ENCODE measurements at regions of chr12 and their contacts with region 1.

Region 1: GRCh38 chr12:30965613-30965985 is 39.1 kb downstream of the TSPAN11 start:
- DNase-seq: no peak
- ATAC-seq: no peak
- H3K4me3 ChIP-seq: no peak overlapping the region
- H3K27ac ChIP-seq: no peak overlapping the region
- H3K4me1 ChIP-seq: peaks cover 0 to 30% (median 7%) of the 10 kb centered on the region in 9 donors
- H3K27me3 ChIP-seq: no peaks in the 10 kb centered on the region
- CTCF ChIP-seq: peak in 5 of 9 donors; percentile 13 to 42 (median 22)

Region 2: GRCh38 chr12:30874455-30875321 is 90.9 kb before region 1 on chr12:
- intact Hi-C with region 1: loop called in 1 of 10 experiments (anchors 10 kb)
- DNase-seq: peak; percentile 11 to 15
- ATAC-seq: peak in 1 of 8 donors; percentile 20
- H3K4me3 ChIP-seq: no peak overlapping the region
- H3K27ac ChIP-seq: no peak overlapping the region
- H3K4me1 ChIP-seq: peaks cover 0 to 4% (median 0%) of the 10 kb centered on the region in 9 donors
- H3K27me3 ChIP-seq: peaks cover 0 to 31% (median 0%) of the 10 kb centered on the region in 7 donors
- CTCF ChIP-seq: no peak

Region 3: DNA sequence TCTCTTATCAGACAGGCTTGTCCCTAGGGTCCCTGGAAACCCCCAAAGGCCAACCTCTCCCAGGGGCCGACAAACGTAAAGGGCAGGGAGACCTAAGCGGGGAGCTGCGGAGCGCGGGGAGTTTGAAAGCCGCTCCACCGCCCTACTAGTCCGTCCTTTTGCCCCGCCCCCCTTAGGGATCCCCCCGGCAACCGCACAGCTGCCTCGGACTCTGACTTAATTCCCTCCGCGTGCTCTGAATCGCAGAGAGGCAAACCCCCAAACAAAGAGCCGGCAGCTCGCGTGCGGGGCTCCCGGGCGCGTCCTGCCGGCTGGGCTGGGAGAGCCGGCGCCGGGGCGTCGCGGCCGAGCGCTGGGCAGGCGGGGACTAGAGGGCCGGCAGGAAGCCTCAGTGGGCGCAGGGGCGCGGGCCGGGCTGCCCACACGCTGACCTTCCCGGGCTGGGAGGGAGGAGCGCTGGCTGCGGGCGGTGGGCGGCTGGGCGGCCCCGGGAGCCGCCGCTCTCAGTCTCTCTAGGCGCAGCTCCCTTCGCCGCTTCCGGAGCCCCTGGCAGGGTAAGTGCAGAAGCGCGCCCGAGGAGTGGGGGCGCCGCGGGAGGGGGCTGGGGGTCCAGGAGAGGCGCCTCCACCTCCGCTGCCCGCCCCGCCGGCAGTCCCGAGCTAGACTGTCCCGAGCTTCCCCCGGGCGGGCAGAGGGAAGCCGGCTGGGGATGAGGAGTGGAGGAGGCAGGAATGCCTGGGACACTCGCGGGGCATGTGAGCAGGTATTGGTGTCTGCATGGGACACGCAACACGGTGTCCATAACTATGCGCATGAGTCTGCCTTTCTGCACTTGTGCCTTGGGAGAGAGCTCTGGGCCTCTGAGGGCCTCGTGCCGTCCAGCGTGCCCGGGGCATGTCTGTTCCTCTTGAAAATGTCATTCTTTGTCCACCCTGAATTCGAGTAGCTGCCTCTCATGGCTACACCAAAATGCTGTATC is 39.1 kb before region 1 on chr12 and contains the start of gene TSPAN11:
- intact Hi-C with region 1: no loop called
- DNase-seq: peak; percentile 31 to 36
- ATAC-seq: peak; percentile 18 to 81 (median 62)
- H3K4me3 ChIP-seq: peak within 1 kb of the TSS in 9 of 10 donors; percentile 36 to 52 (median 44)
- H3K27ac ChIP-seq: peak within 1 kb of the TSS in 3 of 10 donors; percentile 25 to 50 (median 35)
- H3K4me1 ChIP-seq: peaks cover 0 to 22% (median 5%) of the 10 kb centered on the region in 9 donors
- H3K27me3 ChIP-seq: peaks cover 0 to 39% (median 28%) of the 10 kb centered on the region in 7 donors
- CTCF ChIP-seq: no peak
- total RNA-seq, gene TSPAN11: 0.60 to 2.9 (median 1.1) TPM